Activated T-helper 1 cell treated with anti-CD3 and anti-CD28 coated beads, Interleukin-12 subunit alpha, Interleukin-12 subunit beta, Interleukin-2, Interleukin-4 antibody, amounts not matched to agents 30 ng/mL and 10 ng/mL and 1 ng/mL, durations not matched to agents 14 hours and 24 hours and 36 hours (primary cell): ENCODE measurements at regions of chr3 and their contacts with region 1.

Region 1: DNA sequence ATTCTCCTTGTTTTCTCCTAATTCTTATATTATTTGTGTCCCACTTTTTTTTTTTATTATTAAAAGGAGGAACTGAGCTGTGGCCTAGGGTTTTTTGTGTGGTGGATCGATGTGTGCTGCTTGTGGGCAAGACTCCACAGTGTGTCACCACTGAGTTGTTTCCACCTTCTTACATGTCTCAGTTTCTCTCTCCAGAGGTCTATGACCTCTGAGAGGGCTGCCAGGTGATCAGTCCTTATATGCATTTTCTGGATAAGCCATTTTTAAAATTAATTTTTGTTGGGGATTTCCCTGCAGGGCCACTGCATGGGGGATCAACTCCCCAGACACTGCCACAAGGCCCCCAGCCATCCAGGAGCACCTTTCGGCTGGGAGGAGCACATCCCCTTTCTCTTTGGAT is 27.8 kb downstream of the IQCF6 start:
- DNase-seq: no peak
- H3K4me3 Mint-ChIP-seq: no peak overlapping the region
- H3K27ac Mint-ChIP-seq: no peak overlapping the region
- H3K4me1 Mint-ChIP-seq: peaks cover 26% of the 10 kb centered on the region
- H3K27me3 Mint-ChIP-seq: peaks cover 12% of the 10 kb centered on the region

Region 2: DNA sequence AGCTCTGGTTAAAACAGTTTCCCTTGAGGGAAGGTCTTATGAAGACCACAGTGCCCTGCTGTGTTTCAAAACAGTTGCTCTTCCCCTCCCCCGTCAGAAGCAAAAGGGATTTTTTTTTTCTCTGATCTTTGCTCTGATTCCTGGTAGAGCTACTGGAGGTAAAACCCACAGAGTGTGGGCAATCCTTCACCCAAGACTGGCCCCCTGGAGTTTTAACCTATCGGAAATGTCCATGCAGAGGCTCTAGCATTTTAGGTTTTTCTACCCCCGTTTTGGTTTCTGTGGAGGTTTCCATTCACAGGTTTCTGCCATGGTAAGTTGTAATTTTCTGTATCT is 16.7 kb before region 1 on chr3:
- intact Hi-C with region 1: loop called (anchors 2 kb)
- DNase-seq: peak; percentile 39
- H3K4me3 Mint-ChIP-seq: peak overlapping the region; percentile 29
- H3K27ac Mint-ChIP-seq: peak overlapping the region; percentile 87
- H3K4me1 Mint-ChIP-seq: peaks cover 32% of the 10 kb centered on the region
- H3K27me3 Mint-ChIP-seq: peaks cover 6% of the 10 kb centered on the region

Region 3: DNA sequence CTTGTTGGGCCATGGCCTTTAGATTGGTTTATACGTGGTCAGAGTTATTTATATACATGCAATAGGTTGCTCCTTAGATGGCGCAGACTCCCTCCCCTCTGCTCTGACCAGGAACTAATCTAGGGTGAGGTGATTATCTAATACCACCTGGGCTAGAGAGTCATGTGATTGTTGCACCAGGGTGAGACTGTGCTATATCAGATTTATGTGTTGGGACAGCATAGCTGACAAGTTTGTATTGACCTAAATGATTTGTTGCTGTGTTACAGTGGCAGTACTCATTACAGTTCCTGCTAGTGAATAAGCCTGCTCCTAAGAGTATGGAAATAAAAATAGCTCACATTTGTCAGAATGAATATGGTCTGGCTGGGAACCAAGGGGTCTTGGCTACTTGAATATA is 35.0 kb after region 1 on chr3:
- intact Hi-C with region 1: loop called (anchors 5 kb)
- DNase-seq: no peak
- H3K4me3 Mint-ChIP-seq: no peak overlapping the region
- H3K27ac Mint-ChIP-seq: no peak overlapping the region
- H3K4me1 Mint-ChIP-seq: peaks cover 31% of the 10 kb centered on the region
- H3K27me3 Mint-ChIP-seq: peaks cover 17% of the 10 kb centered on the region

Region 4: DNA sequence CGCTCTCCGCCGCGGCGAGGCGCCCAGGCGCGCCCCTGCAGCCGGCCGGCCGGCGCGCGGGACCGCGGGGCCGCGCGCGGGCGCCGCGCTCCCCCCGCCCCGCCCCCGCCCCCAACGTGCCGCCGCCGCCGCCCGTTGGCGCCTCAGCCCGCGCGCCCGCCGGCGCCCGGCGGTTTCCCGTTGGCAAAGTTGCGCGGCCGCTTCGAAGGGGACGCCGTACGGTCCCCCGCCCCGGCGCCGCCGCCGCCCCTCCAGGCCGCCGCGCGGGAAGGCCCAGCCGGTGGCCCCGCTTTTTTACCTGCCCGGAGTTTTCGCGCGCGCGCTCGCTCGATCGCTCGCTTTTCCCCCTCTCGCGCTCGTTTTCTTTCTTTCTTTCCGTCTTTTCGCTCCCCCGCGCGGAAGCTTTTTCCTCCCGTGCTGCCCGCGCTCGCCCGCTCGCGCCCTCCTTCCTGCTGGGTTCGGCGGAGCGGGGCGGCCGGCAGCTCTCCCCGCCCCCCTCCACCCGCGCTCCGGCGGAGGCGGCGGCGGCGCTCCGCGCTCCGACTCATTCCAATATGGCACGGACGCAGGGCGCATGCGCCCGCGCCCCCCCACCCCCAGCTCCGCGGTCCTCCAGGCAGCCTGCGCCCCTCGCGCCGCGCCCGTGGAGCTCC is 1294.4 kb after region 1 on chr3 and contains the start of gene SFMBT1:
- intact Hi-C with region 1: no loop called
- DNase-seq: peak; percentile 60
- H3K4me3 Mint-ChIP-seq: peak within 1 kb of the TSS; percentile 95
- H3K27ac Mint-ChIP-seq: peak within 1 kb of the TSS; percentile 91
- H3K4me1 Mint-ChIP-seq: peaks cover 38% of the 10 kb centered on the region
- H3K27me3 Mint-ChIP-seq: peaks cover 22% of the 10 kb centered on the region
- total RNA-seq, gene SFMBT1: 28.4 and 31.0 TPM in 2 replicates